Activated T-helper 1 cell treated with anti-CD3 and anti-CD28 coated beads, Interleukin-12 subunit alpha, Interleukin-12 subunit beta, Interleukin-2, Interleukin-4 antibody, amounts not matched to agents 30 ng/mL and 10 ng/mL and 1 ng/mL, durations not matched to agents 14 hours and 24 hours and 36 hours (primary cell): ENCODE measurements at regions of chr14 and their contacts with region 1.

Region 1: GRCh38 chr14:97978341-97978740 is 1181.2 kb downstream of the VRK1 start:
- DNase-seq: peak; percentile 70
- H3K4me3 Mint-ChIP-seq: peak overlapping the region; percentile 84
- H3K27ac Mint-ChIP-seq: peak overlapping the region; percentile 87
- H3K4me1 Mint-ChIP-seq: peaks cover 62% of the 10 kb centered on the region
- H3K27me3 Mint-ChIP-seq: no peaks in the 10 kb centered on the region

Region 2: DNA sequence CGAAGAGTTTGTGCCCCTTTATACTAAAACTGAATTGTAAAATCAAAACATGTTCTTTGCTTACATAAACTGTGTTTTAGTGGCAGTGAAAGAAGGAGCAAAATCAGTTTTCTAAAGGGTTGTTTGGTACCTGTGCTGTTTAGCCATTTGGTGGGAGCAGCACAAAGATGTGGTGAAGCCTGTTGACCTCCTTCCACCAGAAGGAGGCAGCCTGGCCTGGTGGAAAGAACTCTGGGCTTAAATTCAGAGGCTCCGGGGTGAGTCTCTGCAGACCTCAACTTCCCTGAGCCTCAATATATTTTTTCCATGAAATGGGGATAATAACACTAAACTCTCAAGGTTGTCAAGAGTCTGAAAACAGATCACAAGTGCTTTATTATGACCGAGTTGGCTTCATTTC is 678.7 kb before region 1 on chr14:
- intact Hi-C with region 1: loop called (anchors 2 kb)
- DNase-seq: no peak
- H3K4me3 Mint-ChIP-seq: no peak overlapping the region
- H3K27ac Mint-ChIP-seq: no peak overlapping the region
- H3K4me1 Mint-ChIP-seq: no peaks in the 10 kb centered on the region
- H3K27me3 Mint-ChIP-seq: peaks cover 15% of the 10 kb centered on the region

Region 3: GRCh38 chr14:97620066-97620465 is 358.3 kb before region 1 on chr14:
- intact Hi-C with region 1: loop called (anchors 5 kb)
- DNase-seq: no peak
- H3K4me3 Mint-ChIP-seq: peak overlapping the region; percentile 79
- H3K27ac Mint-ChIP-seq: peak overlapping the region; percentile 56
- H3K4me1 Mint-ChIP-seq: peaks cover 47% of the 10 kb centered on the region
- H3K27me3 Mint-ChIP-seq: peaks cover 4% of the 10 kb centered on the region

Region 4: GRCh38 chr14:97788364-97788763 is 190.0 kb before region 1 on chr14:
- intact Hi-C with region 1: loop called (anchors 10 kb)
- DNase-seq: no peak
- H3K4me3 Mint-ChIP-seq: no peak overlapping the region
- H3K27ac Mint-ChIP-seq: no peak overlapping the region
- H3K4me1 Mint-ChIP-seq: peaks cover 25% of the 10 kb centered on the region
- H3K27me3 Mint-ChIP-seq: no peaks in the 10 kb centered on the region

Region 5: GRCh38 chr14:98069712-98070171 is 91.4 kb after region 1 on chr14:
- intact Hi-C with region 1: no loop called
- DNase-seq: no peak
- H3K4me3 Mint-ChIP-seq: no peak overlapping the region
- H3K27ac Mint-ChIP-seq: no peak overlapping the region
- H3K4me1 Mint-ChIP-seq: no peaks in the 10 kb centered on the region
- H3K27me3 Mint-ChIP-seq: peaks cover 5% of the 10 kb centered on the region

Region 6: GRCh38 chr14:98173305-98173704 is 195.0 kb after region 1 on chr14:
- intact Hi-C with region 1: loop called (anchors 5 kb)
- DNase-seq: peak; percentile 45
- H3K4me3 Mint-ChIP-seq: peak overlapping the region; percentile 73
- H3K27ac Mint-ChIP-seq: peak overlapping the region; percentile 90
- H3K4me1 Mint-ChIP-seq: peaks cover 97% of the 10 kb centered on the region
- H3K27me3 Mint-ChIP-seq: no peaks in the 10 kb centered on the region

Region 7: GRCh38 chr14:99192028-99192621 is 1213.8 kb after region 1 on chr14:
- intact Hi-C with region 1: loop called (anchors 2 kb)
- DNase-seq: no peak
- H3K4me3 Mint-ChIP-seq: peak overlapping the region; percentile 90
- H3K27ac Mint-ChIP-seq: peak overlapping the region; percentile 99
- H3K4me1 Mint-ChIP-seq: peaks cover 93% of the 10 kb centered on the region
- H3K27me3 Mint-ChIP-seq: no peaks in the 10 kb centered on the region